Ascending aorta (tissue), 2 donors: ENCODE measurements at regions of chr7 and their contacts with region 1.

Region 1: GRCh38 chr7:64665980-64666662 is at the start of gene ZNF107:
- DNase-seq: peak; percentile 82 to 94
- H3K4me3 ChIP-seq: peak within 1 kb of the TSS; percentile 67 to 88
- H3K27ac ChIP-seq: peak within 1 kb of the TSS; percentile 42 to 82
- H3K4me1 ChIP-seq: no peaks in the 10 kb centered on the region
- H3K27me3 ChIP-seq: no peaks in the 10 kb centered on the region
- CTCF ChIP-seq: no peak
- total RNA-seq, gene ZNF107: 0.85 TPM

Region 2: GRCh38 chr7:64313740-64314491 is 352.2 kb before region 1 on chr7 and contains the start of gene ZNF736:
- intact Hi-C with region 1: loop called (anchors 2 kb)
- DNase-seq: peak; percentile 86 to 96
- H3K4me3 ChIP-seq: peak within 1 kb of the TSS; percentile 65 to 72
- H3K27ac ChIP-seq: peak within 1 kb of the TSS; percentile 38 to 63
- H3K4me1 ChIP-seq: peaks cover 0 to 9% of the 10 kb centered on the region in 2 donors
- H3K27me3 ChIP-seq: no peaks in the 10 kb centered on the region
- CTCF ChIP-seq: no peak
- total RNA-seq, gene ZNF736: 6.0 TPM

Region 3: GRCh38 chr7:64504581-64505120 is 161.5 kb before region 1 on chr7:
- intact Hi-C with region 1: no loop called
- DNase-seq: no peak
- H3K4me3 ChIP-seq: no peak overlapping the region
- H3K27ac ChIP-seq: no peak overlapping the region
- H3K4me1 ChIP-seq: no peaks in the 10 kb centered on the region
- H3K27me3 ChIP-seq: no peaks in the 10 kb centered on the region
- CTCF ChIP-seq: no peak

Region 4: GRCh38 chr7:64794171-64794844 is 128.2 kb after region 1 on chr7 and contains the start of gene ZNF138:
- intact Hi-C with region 1: loop called (anchors 2 kb)
- DNase-seq: peak; percentile 88 to 98
- H3K4me3 ChIP-seq: peak within 1 kb of the TSS; percentile 78 to 97
- H3K27ac ChIP-seq: peak within 1 kb of the TSS; percentile 77 to 78
- H3K4me1 ChIP-seq: peaks cover 0 to 4% of the 10 kb centered on the region in 2 donors
- H3K27me3 ChIP-seq: no peaks in the 10 kb centered on the region
- CTCF ChIP-seq: no peak
- total RNA-seq, gene ZNF138: 2.0 TPM

Region 5: GRCh38 chr7:64887756-64888508 is 221.8 kb after region 1 on chr7:
- intact Hi-C with region 1: loop called (anchors 10 kb)
- DNase-seq: no peak
- H3K4me3 ChIP-seq: peak overlapping the region; percentile 51 to 56
- H3K27ac ChIP-seq: no peak overlapping the region
- H3K4me1 ChIP-seq: peaks cover 3 to 25% of the 10 kb centered on the region in 2 donors
- H3K27me3 ChIP-seq: no peaks in the 10 kb centered on the region
- CTCF ChIP-seq: peak; percentile 16 to 46 (median 33)

Region 6: DNA sequence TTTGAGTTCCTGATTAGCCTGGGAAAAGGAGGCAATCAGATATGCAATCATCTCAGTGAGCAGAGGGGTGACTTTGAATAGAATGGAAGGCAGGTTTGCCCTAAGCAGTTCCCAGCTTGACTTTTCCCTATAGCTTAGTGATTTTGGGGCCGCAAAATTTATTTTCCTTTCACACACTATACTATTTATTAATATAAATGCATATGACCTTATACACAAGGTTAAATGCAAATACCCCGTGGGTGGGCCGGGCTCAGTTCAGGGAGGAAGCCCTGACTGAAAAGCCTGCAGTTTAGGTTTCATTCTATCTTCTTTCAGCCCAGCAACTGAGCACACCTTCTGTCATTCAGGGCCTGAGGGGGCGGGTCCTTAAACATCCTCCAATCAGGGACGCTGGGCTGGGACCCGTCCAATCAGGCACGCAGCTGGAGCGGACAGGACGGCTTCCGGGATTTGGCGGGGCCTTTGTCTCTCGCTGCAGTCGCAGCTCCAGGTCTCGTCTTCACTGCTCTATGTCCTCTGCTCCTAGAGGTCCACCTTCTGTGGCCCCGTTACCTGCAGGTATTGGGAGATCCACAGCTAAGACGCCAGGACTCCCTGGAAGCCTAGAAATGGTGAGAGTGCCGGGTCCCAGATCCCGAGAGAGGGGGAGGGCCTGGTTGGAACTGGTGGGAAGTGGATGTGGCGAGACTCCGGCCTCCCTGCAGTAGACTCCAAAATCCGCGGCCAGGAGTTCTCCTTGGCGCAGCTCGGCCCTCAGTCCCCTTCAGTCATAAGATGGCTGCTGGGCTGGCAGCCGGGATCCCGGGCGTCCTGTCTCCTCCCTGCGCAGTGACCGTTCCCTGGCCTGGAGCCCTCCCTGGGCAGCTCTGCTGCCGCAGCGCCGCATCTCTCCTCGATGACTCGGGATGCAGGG is 236.9 kb after region 1 on chr7 and contains the start of gene ZNF273:
- intact Hi-C with region 1: loop called (anchors 5 kb)
- DNase-seq: peak; percentile 83 to 96
- H3K4me3 ChIP-seq: peak within 1 kb of the TSS; percentile 82 to 88
- H3K27ac ChIP-seq: peak within 1 kb of the TSS; percentile 73 to 85
- H3K4me1 ChIP-seq: peaks cover 0 to 5% of the 10 kb centered on the region in 2 donors
- H3K27me3 ChIP-seq: no peaks in the 10 kb centered on the region
- CTCF ChIP-seq: no peak
- total RNA-seq, gene ZNF273: 1.7 TPM

Region 7: DNA sequence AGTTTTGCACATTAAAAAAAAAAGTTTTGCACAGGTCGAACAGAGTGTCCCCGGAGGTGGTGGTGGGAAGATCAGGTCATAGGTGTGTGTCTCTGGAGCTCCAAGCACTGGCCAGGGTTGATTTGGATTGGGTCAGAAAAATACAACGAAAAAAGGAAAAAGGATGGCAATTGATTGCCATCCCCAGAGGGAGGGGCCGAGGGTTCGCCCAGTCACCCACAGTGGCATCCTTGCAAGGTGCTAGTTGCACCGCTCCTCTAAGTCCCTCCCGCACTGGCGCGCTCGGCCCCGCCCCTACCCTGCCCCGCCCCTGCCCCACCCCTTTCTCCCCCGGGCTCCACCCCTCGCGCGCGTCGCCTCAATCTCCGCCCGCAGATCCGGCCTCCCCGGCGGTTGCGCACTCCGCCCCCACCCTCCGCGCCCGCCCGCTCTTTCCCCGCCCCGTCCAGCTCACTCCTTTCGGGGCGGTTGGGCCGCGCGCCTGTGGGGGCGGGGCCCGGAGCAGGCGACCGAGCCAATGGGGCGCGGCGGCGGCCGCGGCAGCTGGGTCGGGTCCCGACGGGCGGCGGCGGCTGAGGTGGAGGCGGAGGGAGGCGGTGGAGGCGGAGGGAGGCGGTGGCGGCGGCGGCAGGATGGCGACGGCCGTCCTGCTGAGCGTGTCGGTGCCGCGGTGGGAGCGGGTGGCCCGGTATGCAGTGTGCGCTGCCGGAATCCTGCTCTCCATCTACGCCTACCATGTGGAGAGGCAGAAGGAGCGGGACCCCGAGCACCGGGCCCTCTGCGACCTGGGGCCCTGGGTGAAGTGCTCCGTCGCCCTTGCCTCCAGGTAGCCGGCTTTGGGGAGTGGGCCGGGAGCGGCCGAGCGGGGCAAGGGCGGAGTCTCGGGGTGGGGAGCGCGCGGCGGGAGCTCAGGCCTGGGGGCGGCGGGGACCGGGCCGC is 371.9 kb after region 1 on chr7:
- intact Hi-C with region 1: loop called (anchors 10 kb)
- DNase-seq: peak; percentile 74 to 96
- H3K4me3 ChIP-seq: peak overlapping the region; percentile 86 to 98
- H3K27ac ChIP-seq: peak overlapping the region; percentile 86 to 87
- H3K4me1 ChIP-seq: peaks cover 0 to 5% of the 10 kb centered on the region in 2 donors
- H3K27me3 ChIP-seq: no peaks in the 10 kb centered on the region
- CTCF ChIP-seq: peak in 1 of 3 experiments; percentile 7

Region 8: GRCh38 chr7:65373608-65374351 is 707.7 kb after region 1 on chr7 and contains the start of gene ZNF92:
- intact Hi-C with region 1: loop called (anchors 10 kb)
- DNase-seq: peak; percentile 93 to 98
- H3K4me3 ChIP-seq: peak within 1 kb of the TSS; percentile 70 to 94
- H3K27ac ChIP-seq: peak within 1 kb of the TSS; percentile 86 to 91
- H3K4me1 ChIP-seq: peaks cover 0 to 14% of the 10 kb centered on the region in 2 donors
- H3K27me3 ChIP-seq: no peaks in the 10 kb centered on the region
- CTCF ChIP-seq: no peak
- total RNA-seq, gene ZNF92: 4.0 TPM